ENCODE measurements at regions of chr16 and their contacts with region 1.

Region 1: GRCh38 chr16:85615852-85616606 is 2.9 kb downstream of the GSE1 start:
- DNase-seq: peak; percentile 93
- ATAC-seq: peak; percentile 57
- H3K4me3 Mint-ChIP-seq: peak overlapping the region; percentile 70
- H3K27ac Mint-ChIP-seq: peak overlapping the region; percentile 75
- H3K4me1 Mint-ChIP-seq: peaks cover 44% of the 10 kb centered on the region
- H3K27me3 Mint-ChIP-seq: no peaks in the 10 kb centered on the region
- CTCF ChIP-seq: peak; percentile 98

Region 2: GRCh38 chr16:85420501-85421337 is 195.3 kb before region 1 on chr16:
- CTCF ChIA-PET with region 1: interaction called, 95 read pairs
- POLR2A ChIA-PET with region 1: interaction called, 4 read pairs
- intact Hi-C with region 1: loop called (anchors 5 kb)
- DNase-seq: peak; percentile 79
- ATAC-seq: peak; percentile 90
- H3K4me3 Mint-ChIP-seq: no peak overlapping the region
- H3K27ac Mint-ChIP-seq: no peak overlapping the region
- H3K4me1 Mint-ChIP-seq: peaks cover 9% of the 10 kb centered on the region
- H3K27me3 Mint-ChIP-seq: no peaks in the 10 kb centered on the region
- CTCF ChIP-seq: peak; percentile 100

Region 3: GRCh38 chr16:85448557-85449197 is 167.4 kb before region 1 on chr16:
- CTCF ChIA-PET with region 1: interaction called, 28 read pairs
- POLR2A ChIA-PET with region 1: interaction called, 3 read pairs
- intact Hi-C with region 1: no loop called
- DNase-seq: peak; percentile 57
- ATAC-seq: peak; percentile 47
- H3K4me3 Mint-ChIP-seq: no peak overlapping the region
- H3K27ac Mint-ChIP-seq: no peak overlapping the region
- H3K4me1 Mint-ChIP-seq: peaks cover 50% of the 10 kb centered on the region
- H3K27me3 Mint-ChIP-seq: no peaks in the 10 kb centered on the region
- CTCF ChIP-seq: no peak

Region 4: GRCh38 chr16:85528528-85529387 is 87.3 kb before region 1 on chr16:
- CTCF ChIA-PET with region 1: interaction called, 16 read pairs
- POLR2A ChIA-PET with region 1: no interaction called
- intact Hi-C with region 1: no loop called
- DNase-seq: peak; percentile 50
- ATAC-seq: peak; percentile 77
- H3K4me3 Mint-ChIP-seq: no peak overlapping the region
- H3K27ac Mint-ChIP-seq: no peak overlapping the region
- H3K4me1 Mint-ChIP-seq: no peaks in the 10 kb centered on the region
- H3K27me3 Mint-ChIP-seq: no peaks in the 10 kb centered on the region
- CTCF ChIP-seq: peak; percentile 71

Region 5: GRCh38 chr16:85564277-85565051 is 51.6 kb before region 1 on chr16:
- CTCF ChIA-PET with region 1: interaction called, 13 read pairs
- POLR2A ChIA-PET with region 1: interaction called, 6 read pairs
- intact Hi-C with region 1: loop called (anchors 2 kb)
- DNase-seq: peak; percentile 83
- ATAC-seq: peak; percentile 71
- H3K4me3 Mint-ChIP-seq: no peak overlapping the region
- H3K27ac Mint-ChIP-seq: peak overlapping the region; percentile 18
- H3K4me1 Mint-ChIP-seq: peaks cover 67% of the 10 kb centered on the region
- H3K27me3 Mint-ChIP-seq: no peaks in the 10 kb centered on the region
- CTCF ChIP-seq: peak; percentile 79

Region 6: DNA sequence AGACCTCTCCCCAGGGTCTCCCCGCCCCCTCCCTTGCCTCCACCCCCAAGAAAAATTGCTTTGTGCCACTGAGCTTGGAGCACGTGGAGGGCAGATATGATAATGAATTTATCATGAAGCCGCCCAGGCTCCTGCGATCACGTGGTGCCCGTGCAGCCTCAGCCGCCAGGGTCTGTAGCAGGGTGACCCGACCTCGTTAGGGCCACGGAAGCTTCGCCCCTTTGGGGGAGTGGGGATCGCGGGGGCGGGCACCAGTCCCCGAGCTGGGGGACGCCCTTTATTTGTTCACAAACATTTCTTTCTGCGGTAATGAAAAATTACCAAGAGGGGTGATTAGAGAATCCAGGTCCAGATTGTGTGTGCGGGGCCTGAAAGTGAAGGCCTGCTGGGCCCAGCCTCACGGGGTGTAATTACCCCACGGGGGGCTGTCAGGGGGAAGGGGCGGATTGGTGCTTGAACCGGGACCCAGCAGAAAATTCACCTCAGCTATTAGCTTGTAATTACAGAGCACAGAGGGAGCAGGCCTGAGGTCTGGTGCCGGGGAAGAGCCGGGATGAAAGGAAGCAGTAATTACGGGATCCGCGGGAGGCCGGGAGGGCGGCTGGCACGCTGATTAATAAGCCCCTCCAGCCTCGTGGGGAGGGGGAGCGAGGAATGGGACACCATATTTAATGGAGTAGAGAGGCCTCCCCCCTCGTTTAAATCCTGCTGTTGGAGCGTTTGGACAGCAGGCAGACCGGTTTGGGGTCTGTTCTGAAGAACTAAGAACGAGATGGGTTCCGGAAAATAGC is 10.4 kb after region 1 on chr16:
- CTCF ChIA-PET with region 1: interaction called, 45 read pairs
- POLR2A ChIA-PET with region 1: interaction called, 4 read pairs
- intact Hi-C with region 1: no loop called
- DNase-seq: no peak
- ATAC-seq: no peak
- H3K4me3 Mint-ChIP-seq: no peak overlapping the region
- H3K27ac Mint-ChIP-seq: no peak overlapping the region
- H3K4me1 Mint-ChIP-seq: peaks cover 36% of the 10 kb centered on the region
- H3K27me3 Mint-ChIP-seq: no peaks in the 10 kb centered on the region
- CTCF ChIP-seq: no peak

Region 7: GRCh38 chr16:85717393-85718121 is 101.5 kb after region 1 on chr16:
- CTCF ChIA-PET with region 1: interaction called, 26 read pairs
- POLR2A ChIA-PET with region 1: no interaction called
- intact Hi-C with region 1: no loop called
- DNase-seq: peak; percentile 78
- ATAC-seq: peak; percentile 68
- H3K4me3 Mint-ChIP-seq: no peak overlapping the region
- H3K27ac Mint-ChIP-seq: no peak overlapping the region
- H3K4me1 Mint-ChIP-seq: peaks cover 9% of the 10 kb centered on the region
- H3K27me3 Mint-ChIP-seq: no peaks in the 10 kb centered on the region
- CTCF ChIP-seq: peak; percentile 92

Region 8: GRCh38 chr16:85902366-85903155 is 286.5 kb after region 1 on chr16:
- CTCF ChIA-PET with region 1: no interaction called
- POLR2A ChIA-PET with region 1: no interaction called
- intact Hi-C with region 1: no loop called
- DNase-seq: peak; percentile 87
- ATAC-seq: peak; percentile 71
- H3K4me3 Mint-ChIP-seq: peak overlapping the region; percentile 86
- H3K27ac Mint-ChIP-seq: peak overlapping the region; percentile 90
- H3K4me1 Mint-ChIP-seq: peaks cover 69% of the 10 kb centered on the region
- H3K27me3 Mint-ChIP-seq: no peaks in the 10 kb centered on the region
- CTCF ChIP-seq: no peak

Measured in activated CD8-positive, alpha-beta T cell treated with anti-CD3 and anti-CD28 coated beads for 36 hours (primary cell).